ENCODE measurements at regions of chrX and their contacts with region 1.

Region 1: DNA sequence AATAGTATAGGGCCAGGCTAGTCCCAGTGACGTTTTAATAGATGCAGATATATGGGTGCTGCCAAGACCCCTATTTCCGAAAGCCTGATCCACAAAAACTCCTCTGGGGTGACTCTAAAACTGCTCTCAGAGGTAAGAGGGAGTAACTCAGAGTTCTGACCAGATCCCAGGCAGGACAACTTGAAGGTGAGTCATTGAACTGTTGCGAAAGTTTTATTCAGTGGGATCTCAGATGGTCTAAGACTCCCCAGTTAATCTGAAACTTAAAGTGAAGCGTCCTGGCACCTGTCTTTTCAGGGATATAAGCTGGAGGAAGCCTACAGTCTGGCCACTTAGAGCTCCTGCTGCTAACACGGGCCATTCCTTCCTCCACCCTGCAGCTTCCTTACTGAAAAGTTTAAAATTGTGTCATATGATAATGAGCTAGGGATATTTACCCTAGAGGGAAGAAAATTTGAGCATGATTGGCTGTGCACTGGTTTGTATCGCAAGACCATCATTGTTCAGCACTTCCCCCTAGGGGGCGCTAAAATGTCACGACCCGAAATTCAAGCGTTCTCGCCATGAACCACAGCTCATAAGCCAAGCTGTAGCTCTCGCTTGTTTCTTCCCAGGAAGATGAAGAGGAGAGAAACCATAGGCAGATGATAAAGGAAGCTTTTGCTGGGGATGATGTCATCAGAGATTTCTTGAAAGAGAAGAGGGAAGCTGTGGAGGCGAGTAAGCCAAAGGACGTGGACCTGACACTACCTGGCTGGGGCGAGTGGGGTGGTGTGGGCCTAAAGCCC is 19.5 kb downstream of the UTP14A start:
- DNase-seq: peak in 1 of 2 donors; percentile 79
- H3K4me3 ChIP-seq: no peak overlapping the region
- H3K27ac ChIP-seq: no peak overlapping the region
- H3K4me1 ChIP-seq: no peaks in the 10 kb centered on the region
- H3K27me3 ChIP-seq: no peaks in the 10 kb centered on the region
- CTCF ChIP-seq: peak; percentile 36 to 65 (median 53)

Region 2: DNA sequence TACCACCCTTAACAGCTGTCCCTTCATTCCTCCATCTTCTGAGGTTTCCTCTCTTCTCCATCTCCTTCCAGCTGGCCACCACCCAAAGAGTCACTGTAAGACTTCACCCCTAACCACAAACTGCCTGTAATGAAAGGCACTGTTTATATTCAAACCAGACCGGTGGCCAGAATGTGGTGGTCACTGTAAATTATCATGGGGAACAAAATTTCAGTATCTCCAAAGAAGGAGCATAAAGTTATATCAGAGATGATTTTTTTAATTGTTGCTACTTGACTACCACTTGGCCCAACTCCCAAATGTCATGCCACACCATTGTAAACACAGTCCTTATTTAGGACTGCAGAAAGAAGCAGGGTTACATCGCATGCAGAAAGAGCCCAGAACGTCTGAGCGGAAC is 447.0 kb before region 1 on chrX:
- intact Hi-C with region 1: no loop called
- DNase-seq: no peak
- H3K4me3 ChIP-seq: no peak overlapping the region
- H3K27ac ChIP-seq: no peak overlapping the region
- H3K4me1 ChIP-seq: no peaks in the 10 kb centered on the region
- H3K27me3 ChIP-seq: no peaks in the 10 kb centered on the region
- CTCF ChIP-seq: no peak

Region 3: GRCh38 chrX:129577473-129577872 is 348.0 kb before region 1 on chrX:
- intact Hi-C with region 1: no loop called
- DNase-seq: peak in 1 of 2 donors; percentile 80
- H3K4me3 ChIP-seq: no peak overlapping the region
- H3K27ac ChIP-seq: peak overlapping the region; percentile 39 to 68
- H3K4me1 ChIP-seq: peaks cover 0 to 9% of the 10 kb centered on the region in 2 donors
- H3K27me3 ChIP-seq: no peaks in the 10 kb centered on the region
- CTCF ChIP-seq: no peak

Region 4: GRCh38 chrX:129905787-129906580 is 19.5 kb before region 1 on chrX and contains the start of gene UTP14A:
- intact Hi-C with region 1: no loop called
- DNase-seq: peak; percentile 58 to 92
- H3K4me3 ChIP-seq: peak within 1 kb of the TSS; percentile 62 to 68
- H3K27ac ChIP-seq: peak within 1 kb of the TSS; percentile 57 to 81
- H3K4me1 ChIP-seq: no peaks in the 10 kb centered on the region
- H3K27me3 ChIP-seq: no peaks in the 10 kb centered on the region
- CTCF ChIP-seq: no peak
- total RNA-seq, gene UTP14A: 1.1 TPM

Region 5: DNA sequence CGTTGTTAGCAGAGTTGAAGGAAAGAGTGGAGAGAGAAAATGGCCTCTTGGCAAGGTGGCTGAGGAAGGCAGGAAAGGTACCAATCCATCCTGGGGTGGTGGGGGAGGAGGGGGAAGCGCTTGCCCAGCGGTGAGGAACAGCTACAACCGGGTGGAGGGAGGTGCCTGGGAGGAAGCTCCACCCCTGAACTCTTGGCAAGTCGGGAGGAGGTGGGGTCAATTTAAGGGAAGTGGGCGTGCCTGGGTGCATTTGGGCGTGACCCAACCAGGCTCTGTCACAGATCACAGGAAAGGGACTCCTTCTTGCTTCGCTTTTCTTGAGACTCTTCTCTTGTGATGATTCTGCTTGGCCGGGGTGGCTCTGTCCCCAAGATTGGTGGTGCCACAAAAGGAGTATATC is 98.6 kb after region 1 on chrX:
- intact Hi-C with region 1: loop called (anchors 2 kb)
- DNase-seq: peak; percentile 57 to 87
- H3K4me3 ChIP-seq: no peak overlapping the region
- H3K27ac ChIP-seq: no peak overlapping the region
- H3K4me1 ChIP-seq: no peaks in the 10 kb centered on the region
- H3K27me3 ChIP-seq: no peaks in the 10 kb centered on the region
- CTCF ChIP-seq: no peak

Region 6: GRCh38 chrX:130120746-130121504 is 195.4 kb after region 1 on chrX:
- intact Hi-C with region 1: loop called (anchors 5 kb)
- DNase-seq: peak in 1 of 2 donors; percentile 88
- H3K4me3 ChIP-seq: peak overlapping the region; percentile 36 to 56
- H3K27ac ChIP-seq: peak overlapping the region; percentile 71 to 72
- H3K4me1 ChIP-seq: peaks cover 0 to 3% of the 10 kb centered on the region in 2 donors
- H3K27me3 ChIP-seq: no peaks in the 10 kb centered on the region
- CTCF ChIP-seq: peak; percentile 53 to 78 (median 65)